ENCODE measurements at regions of chr12 and their contacts with region 1.

Region 1: DNA sequence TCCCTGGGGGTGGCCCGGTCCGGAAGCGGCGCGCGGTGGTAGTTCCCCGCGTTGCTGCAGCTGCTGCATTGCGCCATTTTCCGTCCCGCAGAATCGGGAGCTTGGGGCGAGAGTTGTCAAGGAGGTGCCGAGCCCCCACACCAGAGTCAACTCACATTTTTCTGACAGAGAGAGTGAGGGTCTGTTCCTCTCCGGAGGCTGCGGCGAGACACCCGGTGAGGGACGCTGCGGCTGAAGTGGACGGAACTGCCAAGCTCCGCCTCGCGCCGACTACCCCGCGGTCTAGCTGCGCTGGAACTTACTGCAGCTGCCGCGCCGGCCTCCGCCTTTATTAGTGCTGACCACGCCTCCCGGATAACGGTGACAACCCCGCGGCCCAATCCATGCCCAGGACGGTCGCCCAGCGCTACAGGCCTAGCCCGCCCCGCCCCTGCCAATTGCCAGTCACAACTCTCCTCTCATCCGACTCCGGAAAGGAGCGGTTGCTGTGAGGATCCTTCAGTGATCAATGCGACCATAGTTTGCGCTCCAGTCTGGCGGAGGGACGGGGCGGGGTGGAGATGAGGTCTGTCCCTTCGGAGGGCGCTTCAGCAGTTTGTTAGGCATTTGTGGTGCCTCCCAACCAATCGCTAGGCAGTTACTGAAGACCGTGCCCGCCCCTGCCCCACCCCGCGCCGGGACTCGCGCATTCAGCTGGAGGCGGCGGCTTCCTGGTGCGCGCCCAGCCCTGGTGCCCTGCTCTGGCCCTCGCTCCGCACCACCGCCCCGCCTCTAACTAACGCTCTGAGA is at the start of gene VAMP1:
- DNase-seq: peak; percentile 97 to 98
- ATAC-seq: peak; percentile 91 to 94
- H3K4me3 ChIP-seq: peak within 1 kb of the TSS; percentile 81 to 90 (median 86)
- H3K27ac ChIP-seq: peak within 1 kb of the TSS; percentile 84 to 96 (median 93)
- H3K4me1 ChIP-seq: peaks cover 21 to 23% of the 10 kb centered on the region in 2 donors
- H3K27me3 ChIP-seq: no peaks in the 10 kb centered on the region
- CTCF ChIP-seq: peak in 3 of 5 experiments; percentile 15 to 24 (median 19)
- POLR2A ChIP-seq: peak; percentile 98 to 100
- total RNA-seq, gene VAMP1: 1.1 to 2.0 (median 1.4) TPM

Region 2: GRCh38 chr12:6323340-6323994 is 147.1 kb before region 1 on chr12:
- in situ Hi-C with region 1: loop called in 2 of 4 experiments (anchors 10 to 25 kb)
- intact Hi-C with region 1: loop called (anchors 2 kb)
- DNase-seq: peak; percentile 70 to 86
- ATAC-seq: peak; percentile 77 to 78
- H3K4me3 ChIP-seq: peak overlapping the region; percentile 4 to 27 (median 12)
- H3K27ac ChIP-seq: peak overlapping the region; percentile 70 to 85 (median 81)
- H3K4me1 ChIP-seq: peaks cover 57 to 58% of the 10 kb centered on the region in 2 donors
- H3K27me3 ChIP-seq: no peaks in the 10 kb centered on the region
- CTCF ChIP-seq: peak; percentile 30 to 45 (median 40)
- POLR2A ChIP-seq: no peak

Region 3: DNA sequence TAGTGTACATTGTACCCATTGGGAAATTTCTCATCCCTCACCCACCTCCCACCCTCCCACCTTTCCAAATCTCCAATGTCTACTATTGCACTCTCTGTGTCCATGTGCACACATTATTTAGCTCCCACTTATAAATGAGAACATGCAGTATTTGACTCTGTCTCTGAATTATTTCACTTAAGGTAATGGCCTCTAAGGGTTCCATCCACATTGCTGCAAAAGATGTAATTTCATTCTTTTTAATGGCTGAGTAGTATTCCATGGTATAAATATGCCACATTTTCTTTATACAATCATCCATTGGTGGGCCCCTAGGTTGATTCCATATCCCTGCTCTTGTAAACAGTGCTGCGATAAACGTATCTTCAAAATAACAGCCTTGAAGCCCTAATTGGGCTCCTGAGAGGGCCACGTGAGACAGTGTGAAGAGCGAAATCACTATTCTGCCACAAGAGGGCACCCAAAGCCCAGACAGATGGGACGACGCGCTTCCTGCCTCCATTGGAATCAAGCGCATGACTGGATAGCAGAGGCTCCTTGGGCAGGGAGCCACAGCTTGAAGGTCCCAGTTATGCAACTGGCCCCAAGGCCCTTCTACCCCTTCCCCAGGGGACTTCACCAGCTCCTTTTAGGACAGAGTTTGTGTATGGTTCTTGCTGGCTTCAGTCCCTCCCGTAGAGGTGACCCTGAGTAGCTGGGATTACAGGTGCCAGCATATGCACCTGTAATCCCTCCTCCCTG is 47.1 kb before region 1 on chr12:
- in situ Hi-C with region 1: no loop called
- intact Hi-C with region 1: loop called (anchors 1 kb)
- DNase-seq: peak; percentile 77 to 90
- ATAC-seq: peak; percentile 98 to 99
- H3K4me3 ChIP-seq: no peak overlapping the region
- H3K27ac ChIP-seq: peak overlapping the region in 2 of 4 donors; percentile 30 to 56
- H3K4me1 ChIP-seq: peaks cover 0 to 5% of the 10 kb centered on the region in 2 donors
- H3K27me3 ChIP-seq: no peaks in the 10 kb centered on the region
- CTCF ChIP-seq: peak; percentile 88 to 94 (median 91)
- POLR2A ChIP-seq: no peak

Region 4: DNA sequence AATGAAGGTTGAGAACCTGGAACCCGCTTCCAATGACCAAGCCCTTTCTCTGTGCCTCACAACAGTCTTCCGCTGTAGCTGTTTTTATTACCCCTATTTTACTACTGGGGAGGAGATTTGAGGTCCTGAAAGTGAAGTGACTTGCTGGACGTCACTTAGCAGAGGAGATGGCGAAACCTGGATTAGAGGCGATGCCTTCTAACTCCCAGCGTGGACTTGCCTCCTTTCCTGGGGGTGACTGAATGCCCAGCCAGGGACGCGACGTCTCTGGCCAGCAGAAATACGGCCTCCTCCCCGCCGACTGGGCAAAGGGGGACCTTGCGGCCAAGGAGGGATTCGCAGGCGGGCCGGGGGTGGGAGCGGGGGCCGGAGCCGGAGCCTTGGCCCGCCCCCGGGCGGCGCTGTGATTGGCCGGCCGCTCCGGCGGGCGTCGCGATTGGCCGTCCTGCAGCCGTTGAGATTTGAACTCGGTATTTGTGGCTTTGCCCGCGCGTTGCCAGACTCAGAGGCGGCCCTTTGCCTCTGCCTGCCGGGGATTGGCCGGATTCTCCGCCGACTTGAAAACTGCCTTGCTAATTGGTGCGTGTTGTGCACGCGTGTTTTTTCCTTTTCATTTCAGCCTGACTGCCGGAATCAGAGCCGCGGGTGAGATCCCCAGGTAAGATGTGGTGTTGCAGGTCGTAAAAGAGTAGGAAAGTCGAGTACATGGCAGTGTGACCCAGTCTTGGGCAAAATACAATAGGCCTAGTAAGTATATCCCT is 23.1 kb after region 1 on chr12 and contains the start of gene NCAPD2:
- in situ Hi-C with region 1: no loop called
- intact Hi-C with region 1: loop called (anchors 1 kb)
- DNase-seq: peak; percentile 94 to 95
- ATAC-seq: peak; percentile 90 to 92
- H3K4me3 ChIP-seq: peak within 1 kb of the TSS; percentile 81 to 99 (median 88)
- H3K27ac ChIP-seq: peak within 1 kb of the TSS; percentile 93 to 100 (median 98)
- H3K4me1 ChIP-seq: peaks cover 21 to 27% of the 10 kb centered on the region in 2 donors
- H3K27me3 ChIP-seq: no peaks in the 10 kb centered on the region
- CTCF ChIP-seq: peak; percentile 54 to 79 (median 60)
- POLR2A ChIP-seq: peak; percentile 65 to 89
- total RNA-seq, gene NCAPD2: 12.3 to 250 (median 13.3) TPM

Region 5: GRCh38 chr12:6554168-6555017 is 83.8 kb after region 1 on chr12:
- in situ Hi-C with region 1: no loop called
- intact Hi-C with region 1: loop called (anchors 5 kb)
- DNase-seq: peak; percentile 64 to 87
- ATAC-seq: peak; percentile 26 to 29
- H3K4me3 ChIP-seq: peak overlapping the region; percentile 67 to 88 (median 77)
- H3K27ac ChIP-seq: peak overlapping the region; percentile 90 to 99 (median 92)
- H3K4me1 ChIP-seq: peaks cover 66% of the 10 kb centered on the region in 2 donors
- H3K27me3 ChIP-seq: no peaks in the 10 kb centered on the region
- CTCF ChIP-seq: peak in 4 of 5 experiments; percentile 64 to 70 (median 68)
- POLR2A ChIP-seq: no peak

Measured in gastrocnemius medialis (tissue), 4 donors.